Endothelial cell of umbilical vein (primary cell): ENCODE measurements at regions of chr20 and their contacts with region 1.

Region 1: DNA sequence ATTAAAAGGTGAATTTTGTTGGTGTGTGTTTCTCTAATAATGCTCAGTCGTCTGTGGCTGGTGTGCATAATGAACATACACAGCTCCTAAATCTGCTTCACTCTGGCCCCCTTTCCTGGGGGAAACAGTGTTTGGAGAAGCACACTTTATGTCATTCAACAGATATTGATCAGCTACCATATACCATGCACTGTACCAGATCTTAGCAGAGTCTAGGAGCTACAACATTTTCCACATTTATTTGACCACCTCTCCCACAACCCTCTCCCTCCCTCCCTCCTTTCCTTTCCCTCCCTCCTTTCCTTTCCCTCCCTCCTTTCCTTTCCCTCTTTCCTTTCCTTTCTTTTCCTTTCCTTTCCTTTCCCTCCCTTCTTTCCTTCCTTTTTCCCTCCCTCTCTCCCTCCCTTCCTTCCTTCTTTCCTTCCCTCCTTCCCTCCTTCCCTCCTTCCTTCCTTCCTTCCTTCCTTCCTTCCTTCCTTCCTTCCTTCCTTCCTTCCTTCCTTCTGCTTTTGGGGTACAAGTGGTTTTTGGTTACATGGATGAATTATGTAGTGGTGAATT is 85.7 kb downstream of the PLCB4 start:
- DNase-seq: no peak
- H3K4me3 ChIP-seq: no peak overlapping the region
- H3K27ac ChIP-seq: no peak overlapping the region
- H3K4me1 ChIP-seq: no peaks in the 10 kb centered on the region
- H3K27me3 ChIP-seq: no peaks in the 10 kb centered on the region
- CTCF ChIP-seq: no peak
- POLR2A ChIP-seq: no peak

Region 2: DNA sequence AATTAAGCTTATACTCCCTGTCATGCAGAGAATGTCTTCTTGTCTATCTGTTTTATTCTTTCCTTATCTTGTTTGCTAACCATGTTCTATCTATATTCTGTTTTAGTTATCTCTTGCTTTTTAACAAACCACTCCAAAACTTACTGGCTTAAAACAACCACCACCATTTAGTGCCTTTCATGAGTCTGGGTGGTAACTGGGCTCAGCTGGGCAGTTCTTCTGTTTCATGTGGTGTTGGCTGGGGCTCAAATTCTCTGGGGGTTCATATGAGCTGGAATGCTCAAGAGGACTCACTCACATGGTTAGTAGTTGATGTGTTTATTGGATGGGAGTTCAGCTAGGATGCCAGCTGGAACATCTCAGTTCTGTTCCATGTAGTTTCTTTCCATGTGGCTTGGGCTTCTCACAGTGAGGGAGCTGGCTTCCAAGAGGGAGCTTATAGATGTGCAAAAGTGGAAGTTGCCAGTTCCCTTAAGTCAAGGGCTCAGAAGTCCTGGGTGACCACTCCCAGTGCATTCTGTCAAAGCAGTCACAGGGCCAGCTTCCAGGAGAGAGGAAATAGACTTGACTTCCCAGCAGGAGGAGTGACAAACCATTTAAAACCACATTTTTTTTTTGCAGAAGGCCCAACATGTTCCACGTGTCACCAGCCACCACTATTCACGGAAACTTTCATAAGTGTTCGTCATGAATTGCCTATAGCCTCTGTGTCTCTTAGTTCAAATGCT is 15.3 kb before region 1 on chr20:
- CTCF ChIA-PET with region 1: interaction called, 6 read pairs
- POLR2A ChIA-PET with region 1: no interaction called
- dilution Hi-C with region 1: no loop called
- intact Hi-C with region 1: loop called (anchors 2 kb)
- DNase-seq: no peak
- H3K4me3 ChIP-seq: no peak overlapping the region
- H3K27ac ChIP-seq: no peak overlapping the region
- H3K4me1 ChIP-seq: no peaks in the 10 kb centered on the region
- H3K27me3 ChIP-seq: no peaks in the 10 kb centered on the region
- CTCF ChIP-seq: no peak
- POLR2A ChIP-seq: no peak